ENCODE measurements at regions of chr2 and their contacts with region 1.

Region 1: GRCh38 chr2:56191683-56192082 is 7.9 kb downstream of the CCDC85A start:
- DNase-seq: peak; percentile 68 to 70
- H3K4me3 ChIP-seq: no peak overlapping the region
- H3K4me3 Mint-ChIP-seq: no peak overlapping the region
- H3K27ac Mint-ChIP-seq: no peak overlapping the region
- H3K4me1 ChIP-seq: no peaks in the 10 kb centered on the region
- H3K4me1 Mint-ChIP-seq: peaks cover 6% of the 10 kb centered on the region
- H3K27me3 ChIP-seq: peaks cover 1% of the 10 kb centered on the region; the same call in 1 of the 2 replicates
- H3K27me3 Mint-ChIP-seq: peaks cover 28% of the 10 kb centered on the region
- CTCF ChIP-seq: peak; percentile 52 to 78

Region 2: DNA sequence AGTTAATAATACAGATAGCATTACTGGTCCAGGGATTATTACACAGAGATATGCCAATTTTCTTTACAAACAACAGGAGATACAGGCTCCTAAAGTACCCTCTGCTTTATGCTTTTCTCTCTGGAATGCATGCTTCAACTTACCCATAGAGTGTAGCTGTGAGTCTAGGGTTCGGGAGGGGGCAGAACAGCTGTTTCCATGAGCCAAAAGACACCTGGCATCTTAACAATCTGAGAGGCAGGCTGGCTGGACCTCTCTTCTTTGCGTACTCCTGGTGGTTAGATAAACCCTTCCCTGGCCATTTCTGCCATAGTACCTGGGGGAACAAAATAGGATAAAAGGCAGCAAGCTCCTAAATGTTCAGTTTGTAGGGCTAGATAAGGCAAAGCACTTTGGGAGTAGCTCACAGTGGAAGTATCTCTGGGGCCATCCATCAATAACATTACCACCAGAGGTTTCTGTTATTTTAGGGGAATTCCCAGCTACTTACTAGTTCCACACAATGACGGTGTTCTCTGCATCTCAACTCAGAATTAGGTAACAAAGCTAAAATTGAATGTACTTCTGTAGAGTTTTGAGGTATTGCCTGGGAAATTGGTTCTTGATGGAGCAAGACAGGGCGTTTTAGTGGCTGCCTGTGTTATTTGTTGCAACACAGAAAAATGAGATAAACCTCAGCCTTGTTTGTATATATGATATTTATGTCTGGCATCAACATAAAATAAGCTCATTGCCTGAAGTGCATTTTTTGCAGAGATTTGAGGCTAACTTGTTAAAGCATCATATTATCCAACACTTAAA is 14.1 kb before region 1 on chr2:
- CTCF ChIA-PET with region 1: no interaction called
- POLR2A ChIA-PET with region 1: no interaction called
- intact Hi-C with region 1: no loop called
- DNase-seq: no peak
- H3K4me3 ChIP-seq: no peak overlapping the region
- H3K4me3 Mint-ChIP-seq: no peak overlapping the region
- H3K27ac Mint-ChIP-seq: no peak overlapping the region
- H3K4me1 ChIP-seq: no peaks in the 10 kb centered on the region
- H3K4me1 Mint-ChIP-seq: peaks cover 8% of the 10 kb centered on the region
- H3K27me3 ChIP-seq: no peaks in the 10 kb centered on the region
- H3K27me3 Mint-ChIP-seq: peaks cover 13% of the 10 kb centered on the region
- CTCF ChIP-seq: no peak

Region 3: DNA sequence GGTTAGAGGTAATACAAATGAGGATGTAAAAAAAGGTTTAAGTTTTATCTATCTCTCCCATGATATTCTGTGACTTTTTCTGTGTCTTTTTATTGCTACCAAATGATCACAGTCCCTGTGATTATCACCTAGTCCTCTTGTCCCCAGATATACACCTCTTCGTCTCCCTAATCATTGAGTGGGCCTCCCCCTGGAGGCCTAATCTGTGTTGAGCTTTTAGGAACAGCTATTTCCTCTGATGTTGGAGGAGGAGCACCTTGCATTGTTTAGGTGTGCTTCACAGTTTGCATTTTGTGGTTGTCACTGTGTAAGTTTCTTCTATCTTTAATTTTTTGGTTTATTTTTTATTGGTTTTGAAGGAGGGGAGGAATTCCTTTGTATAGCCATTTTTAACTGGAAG is 25.4 kb after region 1 on chr2:
- CTCF ChIA-PET with region 1: interaction called, 3 read pairs
- POLR2A ChIA-PET with region 1: no interaction called
- intact Hi-C with region 1: loop called (anchors 1 kb)
- DNase-seq: no peak
- H3K4me3 ChIP-seq: no peak overlapping the region
- H3K4me3 Mint-ChIP-seq: no peak overlapping the region
- H3K27ac Mint-ChIP-seq: no peak overlapping the region
- H3K4me1 ChIP-seq: no peaks in the 10 kb centered on the region
- H3K4me1 Mint-ChIP-seq: no peaks in the 10 kb centered on the region
- H3K27me3 ChIP-seq: no peaks in the 10 kb centered on the region
- H3K27me3 Mint-ChIP-seq: peaks cover 16% of the 10 kb centered on the region
- CTCF ChIP-seq: peak in 1 of 2 experiments; percentile 12

Region 4: DNA sequence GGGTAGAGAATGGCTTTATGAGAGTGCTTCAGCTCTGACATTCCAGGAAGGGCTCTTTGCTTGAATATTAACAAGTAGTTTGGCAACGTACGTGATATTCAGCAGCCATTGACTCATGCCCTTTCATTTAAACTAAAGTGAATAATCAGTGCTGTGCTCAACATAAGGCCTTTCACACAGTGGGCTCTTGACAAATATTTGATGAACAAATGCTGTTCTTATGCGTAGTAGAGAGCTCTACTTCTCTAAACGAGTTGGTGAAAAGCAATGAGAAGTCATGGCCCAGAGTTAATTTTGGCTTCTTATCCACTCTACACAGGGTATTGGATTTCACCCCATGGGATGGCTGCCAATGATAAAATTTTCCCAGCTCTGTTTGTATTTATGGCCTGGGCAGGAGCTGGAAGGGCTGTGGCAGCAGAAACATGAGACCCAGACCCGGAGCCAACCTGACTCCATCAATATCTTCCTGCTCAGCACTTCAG is 331.0 kb after region 1 on chr2:
- CTCF ChIA-PET with region 1: no interaction called
- POLR2A ChIA-PET with region 1: no interaction called
- intact Hi-C with region 1: loop called (anchors 10 kb)
- DNase-seq: no peak
- H3K4me3 ChIP-seq: no peak overlapping the region
- H3K4me3 Mint-ChIP-seq: no peak overlapping the region
- H3K27ac Mint-ChIP-seq: no peak overlapping the region
- H3K4me1 ChIP-seq: no peaks in the 10 kb centered on the region
- H3K4me1 Mint-ChIP-seq: no peaks in the 10 kb centered on the region
- H3K27me3 ChIP-seq: no peaks in the 10 kb centered on the region
- H3K27me3 Mint-ChIP-seq: peaks cover 3% of the 10 kb centered on the region
- CTCF ChIP-seq: no peak

Region 5: DNA sequence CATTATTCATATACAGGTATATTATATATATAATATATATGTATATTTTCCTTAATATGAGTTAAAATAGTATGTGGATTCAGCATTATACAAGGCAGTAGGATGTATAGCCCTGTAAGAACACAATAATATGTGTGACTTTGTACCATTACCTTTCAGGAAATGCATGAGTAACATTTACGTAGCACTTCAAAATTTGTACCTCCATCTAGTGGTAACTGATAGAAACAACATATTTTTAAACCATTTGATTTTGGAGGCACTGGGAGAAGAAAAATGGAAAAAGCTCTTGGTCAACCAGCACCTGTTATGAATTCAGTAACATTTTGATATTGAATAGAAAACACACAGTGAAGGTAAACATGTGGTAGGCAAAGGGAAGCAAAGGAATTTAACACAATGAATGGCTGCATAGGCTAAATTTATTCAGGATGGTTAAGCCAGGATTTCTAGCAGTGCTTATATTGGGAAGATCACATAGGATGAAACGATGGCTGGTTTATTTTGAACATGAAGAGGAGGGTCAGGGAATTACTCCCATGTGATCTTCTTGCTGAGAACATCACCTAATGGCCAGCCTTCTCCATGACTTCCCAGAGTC is 557.6 kb after region 1 on chr2:
- CTCF ChIA-PET with region 1: no interaction called
- POLR2A ChIA-PET with region 1: no interaction called
- intact Hi-C with region 1: loop called (anchors 1 kb)
- DNase-seq: no peak
- H3K4me3 ChIP-seq: no peak overlapping the region
- H3K4me3 Mint-ChIP-seq: no peak overlapping the region
- H3K27ac Mint-ChIP-seq: no peak overlapping the region
- H3K4me1 ChIP-seq: no peaks in the 10 kb centered on the region
- H3K4me1 Mint-ChIP-seq: no peaks in the 10 kb centered on the region
- H3K27me3 ChIP-seq: no peaks in the 10 kb centered on the region
- H3K27me3 Mint-ChIP-seq: peaks cover 4% of the 10 kb centered on the region
- CTCF ChIP-seq: peak; percentile 47 to 51

Region 6: GRCh38 chr2:57497489-57498096 is 1305.9 kb after region 1 on chr2:
- CTCF ChIA-PET with region 1: no interaction called
- POLR2A ChIA-PET with region 1: interaction called, 3 read pairs
- intact Hi-C with region 1: loop called (anchors 5 kb)
- DNase-seq: peak; percentile 52 to 70
- H3K4me3 ChIP-seq: no peak overlapping the region
- H3K4me3 Mint-ChIP-seq: no peak overlapping the region
- H3K27ac Mint-ChIP-seq: no peak overlapping the region
- H3K4me1 ChIP-seq: 0 out of 2 replicates have a peak, but pooled peaks cover 4% of the 10 kb centered on the region
- H3K4me1 Mint-ChIP-seq: no peaks in the 10 kb centered on the region
- H3K27me3 ChIP-seq: no peaks in the 10 kb centered on the region
- H3K27me3 Mint-ChIP-seq: no peaks in the 10 kb centered on the region
- CTCF ChIP-seq: peak; percentile 82 to 83

Measured in Caco-2 (cell line).